ENCODE measurements at regions of chr11 and their contacts with region 1.

Region 1: DNA sequence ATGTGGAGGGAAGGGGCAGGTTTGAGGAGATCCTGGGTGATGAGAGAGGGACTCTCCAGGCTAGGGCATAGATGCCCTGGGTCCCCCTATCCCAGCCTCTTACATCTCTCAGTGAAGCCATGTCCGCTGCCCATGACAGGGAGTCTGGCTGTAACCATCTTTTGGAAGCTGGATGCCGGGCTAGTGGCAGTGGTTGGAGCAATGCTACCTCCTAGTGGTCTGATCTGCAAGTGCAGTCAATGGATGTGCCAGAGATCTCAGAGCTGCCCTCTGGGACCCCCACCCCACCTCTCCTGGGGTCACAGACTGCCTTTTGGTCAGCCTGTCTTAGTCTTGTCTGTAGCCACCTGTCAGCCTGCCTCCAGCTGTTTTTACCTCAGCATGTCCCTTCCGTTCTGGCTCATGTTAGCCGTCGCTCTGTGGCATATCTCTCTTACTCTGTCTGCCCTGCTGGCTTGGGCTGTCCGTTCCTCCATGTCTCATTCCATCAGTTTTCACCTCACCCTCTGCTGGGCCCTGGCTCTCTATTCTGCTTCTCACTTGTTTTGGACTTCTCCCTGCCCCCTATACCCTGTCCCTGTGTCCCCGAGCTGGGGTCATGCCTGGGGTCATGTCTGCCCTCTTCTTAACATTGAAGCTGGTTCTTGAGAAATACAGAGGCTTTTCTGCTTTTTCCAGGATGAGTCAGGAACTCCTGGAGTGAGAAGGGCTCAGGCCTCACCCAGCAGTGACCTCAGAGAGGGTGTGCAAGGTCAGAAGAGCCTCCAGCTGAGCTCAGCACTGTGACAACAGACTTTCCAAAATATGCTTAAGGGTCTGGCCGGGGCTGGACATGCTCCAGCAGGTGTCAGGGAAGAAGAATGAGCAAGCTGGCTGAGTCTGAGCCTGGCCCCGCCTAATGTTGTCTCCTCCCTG is 52.0 kb upstream of the THY1 start:
- DNase-seq: no peak
- H3K4me3 ChIP-seq: no peak overlapping the region
- CTCF ChIP-seq: peak; percentile 93

Region 2: GRCh38 chr11:119155733-119156492 is 319.0 kb before region 1 on chr11:
- CTCF ChIA-PET with region 1: no interaction called
- POLR2A ChIA-PET with region 1: no interaction called
- DNase-seq: no peak
- H3K4me3 ChIP-seq: no peak overlapping the region
- CTCF ChIP-seq: peak; percentile 4

Region 3: DNA sequence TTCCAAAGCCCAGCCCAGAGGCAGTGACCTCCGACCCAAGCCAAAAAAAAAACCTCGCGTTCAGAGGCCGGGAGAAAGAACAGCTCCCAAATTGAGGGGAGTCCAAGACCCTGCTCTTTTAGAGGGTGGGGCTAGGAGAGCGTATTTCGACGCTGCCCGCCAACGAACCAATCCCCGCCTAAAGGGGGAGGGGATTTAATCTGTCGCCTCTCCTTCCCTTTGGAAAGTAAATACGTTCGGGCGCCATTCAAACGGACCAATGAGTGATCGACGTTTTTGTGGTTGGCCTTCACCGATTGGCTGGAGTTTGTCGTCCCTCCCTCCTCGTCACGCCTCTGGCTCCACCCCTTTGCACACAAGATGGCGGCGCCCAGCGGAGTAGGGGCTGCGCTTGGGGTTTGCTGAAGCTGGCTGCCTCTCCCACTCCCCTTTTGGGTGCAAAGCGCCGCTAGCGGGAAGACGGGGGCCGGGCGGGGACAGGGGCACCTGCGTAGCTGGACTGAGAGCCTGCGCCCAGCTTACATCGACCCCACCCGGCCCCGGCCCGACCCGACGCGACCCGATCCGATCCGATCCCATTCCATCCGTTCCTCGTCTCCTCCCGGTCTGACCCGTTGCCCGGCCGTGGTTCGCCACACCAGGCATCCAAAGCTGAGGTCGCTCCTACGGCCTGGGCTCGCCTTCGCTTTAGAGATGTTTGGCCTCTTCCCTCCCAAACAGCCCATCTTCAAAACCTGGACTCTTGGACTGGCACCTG is 140.6 kb before region 1 on chr11 and contains the start of gene RNF26:
- CTCF ChIA-PET with region 1: interaction called, 136 read pairs
- POLR2A ChIA-PET with region 1: interaction called, 5 read pairs
- DNase-seq: peak; percentile 88
- H3K4me3 ChIP-seq: peak within 1 kb of the TSS; percentile 97
- CTCF ChIP-seq: no peak

Region 4: DNA sequence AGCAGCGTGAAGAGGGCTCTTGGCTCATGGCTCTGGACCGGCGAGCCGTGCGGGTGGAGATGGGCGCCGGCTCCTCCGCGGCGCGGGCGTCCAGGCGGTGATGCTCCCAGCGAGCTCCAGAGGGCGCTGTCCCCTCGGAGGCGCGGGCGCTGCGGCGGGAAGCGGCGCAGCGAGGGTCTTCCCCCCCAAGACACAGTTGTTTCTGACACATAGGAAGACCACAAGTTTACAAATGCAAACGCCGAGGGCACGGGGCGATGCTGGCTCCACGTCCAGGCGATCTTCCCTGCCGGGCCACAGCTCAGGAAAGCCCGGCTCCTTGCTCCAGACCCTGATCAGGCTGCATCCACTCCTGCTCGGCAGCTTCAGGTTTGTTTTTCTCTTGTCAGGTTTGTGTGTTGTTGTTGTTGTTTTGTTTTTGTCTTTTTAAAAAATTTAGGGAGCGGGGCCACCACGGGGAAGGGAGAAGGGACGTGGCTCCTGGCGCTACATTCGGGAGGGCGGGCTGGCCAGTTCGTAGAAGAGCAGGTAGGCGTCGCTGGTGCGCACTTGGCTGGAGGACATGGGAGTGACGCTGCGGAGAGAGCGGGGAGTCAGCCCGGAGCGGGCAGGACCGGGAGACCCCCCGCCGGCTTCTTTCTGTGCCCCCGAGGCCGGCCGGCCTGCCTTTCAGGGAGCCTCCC is 118.4 kb before region 1 on chr11:
- CTCF ChIA-PET with region 1: interaction called, 365 read pairs
- POLR2A ChIA-PET with region 1: interaction called, 3 read pairs
- DNase-seq: no peak
- H3K4me3 ChIP-seq: peak overlapping the region; percentile 69
- CTCF ChIP-seq: peak; percentile 98

Region 5: DNA sequence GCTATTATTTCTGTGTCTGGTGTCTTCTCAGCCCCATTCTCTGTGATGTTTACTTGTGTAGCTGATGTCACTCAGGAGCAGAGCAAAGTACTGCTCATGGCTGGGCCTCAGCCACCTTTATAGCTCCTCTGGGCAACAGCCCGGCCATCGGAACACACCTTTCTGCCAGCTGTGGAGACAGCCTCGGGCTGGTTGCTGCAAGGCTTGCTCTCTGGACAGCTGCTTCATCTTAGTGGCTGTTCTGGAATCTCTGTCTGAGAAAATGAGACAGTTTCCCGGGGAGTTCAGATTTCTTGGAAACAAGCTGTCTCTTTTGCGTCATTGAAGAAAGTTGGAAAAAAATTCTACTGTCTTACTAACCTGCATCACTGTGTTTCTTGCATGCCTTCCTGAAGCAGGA is 71.9 kb before region 1 on chr11:
- CTCF ChIA-PET with region 1: interaction called, 18 read pairs
- POLR2A ChIA-PET with region 1: no interaction called
- DNase-seq: no peak
- H3K4me3 ChIP-seq: no peak overlapping the region
- CTCF ChIP-seq: no peak

Region 6: GRCh38 chr11:119416606-119417580 is 58.0 kb before region 1 on chr11:
- CTCF ChIA-PET with region 1: interaction called, 103 read pairs
- POLR2A ChIA-PET with region 1: interaction called, 19 read pairs
- DNase-seq: no peak
- H3K4me3 ChIP-seq: no peak overlapping the region
- CTCF ChIP-seq: no peak

Region 7: DNA sequence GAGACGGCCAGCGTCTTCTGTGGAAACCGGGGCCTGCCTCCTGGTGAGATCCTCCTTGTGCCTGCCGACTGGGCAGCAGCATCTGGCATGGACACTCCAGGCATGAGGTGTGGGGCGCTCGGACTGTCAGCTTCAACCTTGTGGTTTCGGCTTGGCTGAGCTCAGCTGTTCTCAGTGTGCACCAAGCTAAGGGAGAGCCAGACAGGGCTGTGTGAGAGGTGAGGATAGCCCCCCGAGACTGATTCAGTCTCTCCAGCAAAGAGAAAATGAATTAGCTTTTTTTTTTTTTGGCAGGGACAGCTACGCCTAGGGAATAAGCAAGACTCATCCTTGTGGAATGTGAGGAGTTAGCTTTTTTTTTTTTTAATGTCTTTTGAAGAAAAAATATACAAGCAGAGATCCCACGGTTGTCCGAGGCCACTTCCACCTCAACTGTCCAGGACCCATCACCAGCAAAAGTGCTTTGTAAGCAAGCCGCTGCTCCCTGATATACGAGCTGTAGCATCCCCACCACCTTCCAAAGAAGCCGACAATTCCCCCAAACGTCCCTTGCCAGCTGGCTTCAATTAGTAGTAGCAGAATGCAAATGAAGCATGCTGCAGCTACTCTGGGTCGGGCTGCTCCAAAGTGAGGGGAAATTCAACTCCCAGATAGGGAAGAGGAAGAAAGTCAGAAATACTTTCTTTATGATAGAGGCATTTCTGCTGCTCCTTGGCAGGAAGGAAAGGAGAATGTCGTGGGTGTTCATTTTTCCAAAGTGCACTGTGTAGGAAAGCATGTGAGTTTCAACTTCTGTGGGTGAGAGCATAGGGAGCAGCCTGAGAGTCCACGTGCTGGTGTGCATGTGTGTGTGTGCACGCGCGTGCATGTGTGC is 42.2 kb before region 1 on chr11:
- CTCF ChIA-PET with region 1: interaction called, 18 read pairs
- POLR2A ChIA-PET with region 1: interaction called, 6 read pairs
- DNase-seq: no peak
- H3K4me3 ChIP-seq: peak overlapping the region; percentile 48
- CTCF ChIP-seq: no peak

Region 8: DNA sequence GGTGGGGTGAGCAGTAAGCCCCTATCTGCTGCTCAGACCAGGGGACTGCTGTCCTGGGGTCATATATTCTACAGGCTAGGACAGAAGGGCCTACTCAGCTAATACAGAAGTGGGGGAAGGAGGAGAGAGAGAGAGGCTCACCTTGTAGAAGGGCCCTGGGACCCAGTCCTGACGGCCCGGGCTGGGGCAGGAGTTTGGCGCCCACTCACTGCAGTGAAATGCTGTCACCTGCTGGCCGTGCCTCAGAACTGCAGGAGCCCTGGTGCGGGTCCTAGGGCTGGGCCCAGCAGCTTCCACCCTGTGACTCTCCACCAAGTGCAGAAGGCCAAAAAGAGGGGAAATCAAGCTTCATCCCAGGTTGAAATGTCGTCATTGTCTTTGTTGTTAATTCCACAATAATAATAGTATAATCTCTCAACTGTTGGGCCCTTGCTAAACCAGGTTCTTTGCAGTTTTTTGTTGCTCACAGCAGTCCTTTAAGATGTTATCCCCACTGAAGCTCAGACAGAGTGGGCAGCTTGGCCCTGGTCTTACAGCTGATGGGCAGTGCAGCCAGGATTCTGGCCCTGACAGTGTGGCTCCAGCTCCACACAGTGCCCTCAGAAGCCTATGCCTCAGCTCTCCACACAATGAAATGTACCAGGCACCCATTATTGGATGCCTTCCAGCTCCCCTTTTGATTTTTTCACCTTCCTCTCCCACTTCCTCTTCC is 633.4 kb after region 1 on chr11:
- CTCF ChIA-PET with region 1: interaction called, 14 read pairs
- POLR2A ChIA-PET with region 1: no interaction called
- DNase-seq: no peak
- H3K4me3 ChIP-seq: no peak overlapping the region
- CTCF ChIP-seq: peak; percentile 98